Activated T-helper 1 cell treated with anti-CD3 and anti-CD28 coated beads, Interleukin-12 subunit alpha, Interleukin-12 subunit beta, Interleukin-2, Interleukin-4 antibody, amounts not matched to agents 30 ng/mL and 10 ng/mL and 1 ng/mL, durations not matched to agents 14 hours and 24 hours and 36 hours (primary cell): ENCODE measurements at regions of chr6 and their contacts with region 1.

Region 1: DNA sequence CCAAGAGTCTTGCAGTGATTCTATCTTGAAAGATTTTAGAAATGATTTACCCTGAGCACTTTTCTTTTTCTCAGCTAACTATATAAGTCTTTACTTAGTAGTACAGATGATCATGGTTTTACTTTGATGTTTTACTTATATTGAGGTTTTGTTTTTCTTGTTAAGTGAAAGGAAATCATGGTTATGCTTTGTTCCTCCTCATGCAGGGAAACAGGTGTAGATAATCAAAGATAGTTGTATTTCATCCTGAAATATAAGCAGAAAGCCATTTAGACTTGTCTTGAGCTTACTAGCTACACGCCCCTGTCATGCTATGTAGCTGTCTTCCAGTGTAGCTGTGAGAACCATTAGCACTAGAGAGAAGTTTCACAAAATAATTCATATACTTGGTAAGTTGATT is 113.9 kb downstream of the HIVEP1 start:
- DNase-seq: no peak
- H3K4me3 Mint-ChIP-seq: no peak overlapping the region
- H3K27ac Mint-ChIP-seq: no peak overlapping the region
- H3K4me1 Mint-ChIP-seq: peaks cover 47% of the 10 kb centered on the region
- H3K27me3 Mint-ChIP-seq: no peaks in the 10 kb centered on the region

Region 2: GRCh38 chr6:12081771-12082170 is 44.3 kb before region 1 on chr6:
- intact Hi-C with region 1: loop called (anchors 5 kb)
- DNase-seq: no peak
- H3K4me3 Mint-ChIP-seq: no peak overlapping the region
- H3K27ac Mint-ChIP-seq: peak overlapping the region; percentile 37
- H3K4me1 Mint-ChIP-seq: peaks cover 38% of the 10 kb centered on the region
- H3K27me3 Mint-ChIP-seq: no peaks in the 10 kb centered on the region